Psoas muscle (tissue), 8 donors: ENCODE measurements at regions of chr3 and their contacts with region 1.

Region 1: GRCh38 chr3:124084022-124084881 is 92.3 kb upstream of the ROPN1 start:
- DNase-seq: no peak
- ATAC-seq: no peak
- H3K4me3 ChIP-seq: no peak overlapping the region
- H3K27ac ChIP-seq: no peak overlapping the region
- H3K4me1 ChIP-seq: peaks cover 4% of the 10 kb centered on the region
- H3K27me3 ChIP-seq: no peaks in the 10 kb centered on the region
- CTCF ChIP-seq: no peak

Region 2: GRCh38 chr3:124142389-124142970 is 58.2 kb after region 1 on chr3:
- intact Hi-C with region 1: no loop called
- DNase-seq: no peak
- ATAC-seq: no peak
- H3K4me3 ChIP-seq: no peak overlapping the region
- H3K27ac ChIP-seq: no peak overlapping the region
- H3K4me1 ChIP-seq: peaks cover 10% of the 10 kb centered on the region
- H3K27me3 ChIP-seq: no peaks in the 10 kb centered on the region
- CTCF ChIP-seq: no peak

Region 3: GRCh38 chr3:124281453-124282316 is 197.4 kb after region 1 on chr3:
- intact Hi-C with region 1: loop called in 1 of 2 experiments (anchors 5 kb)
- DNase-seq: no peak
- ATAC-seq: peak; percentile 63 to 84 (median 75)
- H3K4me3 ChIP-seq: no peak overlapping the region
- H3K27ac ChIP-seq: no peak overlapping the region
- H3K4me1 ChIP-seq: peaks cover 7% of the 10 kb centered on the region
- H3K27me3 ChIP-seq: no peaks in the 10 kb centered on the region
- CTCF ChIP-seq: peak; percentile 54